Heart left ventricle (tissue), 16 donors: ENCODE measurements at regions of chr7 and their contacts with region 1.

Region 1: DNA sequence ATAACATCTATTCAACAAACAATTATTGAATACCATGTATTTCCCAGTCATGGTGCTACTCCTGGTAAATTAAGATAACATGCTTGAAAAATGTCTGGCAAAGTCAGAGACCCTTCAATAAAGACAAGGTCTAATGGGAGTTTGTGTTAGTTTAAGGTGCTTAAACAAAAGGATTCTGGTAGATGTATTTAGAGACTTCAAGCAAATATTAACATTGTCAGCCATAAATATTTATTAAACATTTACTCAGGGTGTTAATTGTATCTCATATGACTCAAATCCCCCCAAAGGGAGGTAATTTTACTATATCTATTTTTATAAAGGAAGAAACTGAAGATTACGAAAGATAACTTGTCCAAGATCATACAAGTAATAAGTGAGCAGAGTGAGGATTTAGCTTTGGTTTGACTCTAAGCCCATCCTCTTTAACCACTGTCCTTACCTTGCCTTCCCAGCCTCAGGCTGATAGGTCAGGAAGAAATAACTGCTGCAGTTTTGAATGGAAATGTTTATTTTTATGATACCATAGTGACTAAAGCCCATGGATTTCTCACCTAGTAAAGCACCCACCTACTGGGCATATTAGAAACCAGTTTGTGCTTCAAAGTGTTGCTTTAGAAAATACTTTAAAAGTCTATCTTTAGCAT is 215.4 kb downstream of the COBL start:
- DNase-seq: no peak
- ATAC-seq: no peak
- H3K4me3 ChIP-seq: no peak overlapping the region
- H3K27ac ChIP-seq: no peak overlapping the region
- H3K4me1 ChIP-seq: no peaks in the 10 kb centered on the region
- H3K27me3 ChIP-seq: no peaks in the 10 kb centered on the region
- CTCF ChIP-seq: no peak
- POLR2A ChIP-seq: no peak

Region 2: DNA sequence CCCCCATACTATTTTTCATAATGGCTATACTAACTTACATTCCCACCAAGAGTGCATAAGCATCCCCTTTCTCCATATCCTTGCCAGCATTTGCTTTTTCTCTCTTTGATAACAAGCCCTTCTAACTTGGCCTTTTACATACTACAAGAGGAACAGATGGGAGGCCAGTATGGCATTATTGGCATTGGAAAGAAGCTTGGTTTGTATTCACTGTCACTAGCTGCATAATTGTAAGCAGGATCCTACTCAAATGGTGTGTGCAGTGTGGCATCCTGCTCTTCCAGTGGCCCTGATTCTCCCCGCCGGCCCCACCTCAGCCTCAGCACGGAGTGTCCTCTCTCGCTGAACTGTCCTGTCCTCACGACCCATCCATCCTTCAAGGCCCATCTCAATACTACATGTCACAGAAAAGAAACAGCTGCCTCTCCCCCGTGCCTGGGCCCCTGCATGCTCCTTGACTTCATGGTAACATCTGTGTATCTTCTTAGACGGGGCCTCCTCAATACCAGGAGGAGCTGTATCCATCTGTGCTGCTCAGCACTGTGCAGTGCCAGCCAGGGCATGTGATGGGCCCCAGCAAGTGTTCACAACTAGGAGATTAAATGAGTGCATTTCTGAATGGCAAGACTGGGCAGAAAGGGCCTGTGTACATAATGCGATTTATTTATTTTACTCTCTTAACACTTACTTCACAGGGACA is 10.2 kb after region 1 on chr7:
- intact Hi-C with region 1: loop called in 1 of 10 experiments (anchors 1 kb)
- DNase-seq: no peak
- ATAC-seq: peak in 1 of 4 donors; percentile 22
- H3K4me3 ChIP-seq: no peak overlapping the region
- H3K27ac ChIP-seq: no peak overlapping the region
- H3K4me1 ChIP-seq: no peaks in the 10 kb centered on the region
- H3K27me3 ChIP-seq: no peaks in the 10 kb centered on the region
- CTCF ChIP-seq: no peak
- POLR2A ChIP-seq: no peak

Region 3: GRCh38 chr7:51162724-51163329 is 61.6 kb after region 1 on chr7:
- intact Hi-C with region 1: no loop called
- DNase-seq: peak in 4 of 5 donors; percentile 61 to 74 (median 68)
- ATAC-seq: peak; percentile 68 to 90 (median 86)
- H3K4me3 ChIP-seq: no peak overlapping the region
- H3K27ac ChIP-seq: no peak overlapping the region
- H3K4me1 ChIP-seq: peaks cover 0 to 17% (median 2%) of the 10 kb centered on the region in 12 donors
- H3K27me3 ChIP-seq: peaks cover 0 to 7% (median 0%) of the 10 kb centered on the region in 9 donors
- CTCF ChIP-seq: peak; percentile 72 to 88 (median 78)
- POLR2A ChIP-seq: no peak